CD4-positive, alpha-beta T cell (primary cell): ENCODE measurements at regions of chr3 and their contacts with region 1.

Region 1: GRCh38 chr3:143674100-143674968 is 173.9 kb downstream of the SLC9A9 start:
- DNase-seq: peak; percentile 38 to 85 (median 66)
- ATAC-seq: peak; percentile 97
- H3K4me3 ChIP-seq: no peak overlapping the region
- H3K4me3 Mint-ChIP-seq: peak overlapping the region; percentile 0
- H3K27ac ChIP-seq: no peak overlapping the region
- H3K27ac Mint-ChIP-seq: no peak overlapping the region
- H3K4me1 ChIP-seq: peaks cover 3% of the 10 kb centered on the region
- H3K4me1 Mint-ChIP-seq: peaks cover 6% of the 10 kb centered on the region
- H3K27me3 ChIP-seq: no peaks in the 10 kb centered on the region
- H3K27me3 Mint-ChIP-seq: no peaks in the 10 kb centered on the region
- CTCF ChIP-seq: peak; percentile 95

Region 2: DNA sequence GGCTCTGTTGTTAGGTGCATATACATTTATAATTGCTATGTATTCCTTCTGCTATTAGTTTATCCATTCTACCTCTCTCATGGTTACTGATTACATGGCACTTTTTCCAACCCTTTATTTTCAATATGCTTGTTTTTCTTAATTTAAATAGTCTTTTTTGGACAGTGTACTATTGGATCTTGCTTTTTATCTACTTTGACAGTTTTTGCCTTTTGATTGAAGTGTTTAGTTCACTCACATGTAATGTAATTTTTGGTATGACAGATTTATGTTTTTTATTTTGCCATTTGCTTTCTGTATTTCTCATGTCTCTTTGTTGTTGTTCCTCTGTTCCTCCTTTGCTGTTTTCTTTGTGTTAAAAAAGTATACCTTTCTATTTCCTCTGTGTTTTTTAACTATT is 906.0 kb before region 1 on chr3:
- CTCF ChIA-PET with region 1: no interaction called
- POLR2A ChIA-PET with region 1: no interaction called
- intact Hi-C with region 1: no loop called
- DNase-seq: no peak
- ATAC-seq: no peak
- H3K4me3 ChIP-seq: no peak overlapping the region
- H3K4me3 Mint-ChIP-seq: no peak overlapping the region
- H3K27ac ChIP-seq: no peak overlapping the region
- H3K27ac Mint-ChIP-seq: no peak overlapping the region
- H3K4me1 ChIP-seq: no peaks in the 10 kb centered on the region
- H3K4me1 Mint-ChIP-seq: no peaks in the 10 kb centered on the region
- H3K27me3 ChIP-seq: no peaks in the 10 kb centered on the region
- H3K27me3 Mint-ChIP-seq: no peaks in the 10 kb centered on the region
- CTCF ChIP-seq: no peak

Region 3: GRCh38 chr3:142828703-142829305 is 845.5 kb before region 1 on chr3:
- CTCF ChIA-PET with region 1: no interaction called
- POLR2A ChIA-PET with region 1: no interaction called
- intact Hi-C with region 1: loop called in 1 of 2 experiments (anchors 5 kb)
- DNase-seq: peak; percentile 14 to 67 (median 34)
- ATAC-seq: peak; percentile 82
- H3K4me3 ChIP-seq: no peak overlapping the region
- H3K4me3 Mint-ChIP-seq: no peak overlapping the region
- H3K27ac ChIP-seq: no peak overlapping the region
- H3K27ac Mint-ChIP-seq: no peak overlapping the region
- H3K4me1 ChIP-seq: no peaks in the 10 kb centered on the region
- H3K4me1 Mint-ChIP-seq: no peaks in the 10 kb centered on the region
- H3K27me3 ChIP-seq: no peaks in the 10 kb centered on the region
- H3K27me3 Mint-ChIP-seq: no peaks in the 10 kb centered on the region
- CTCF ChIP-seq: peak; percentile 49

Region 4: DNA sequence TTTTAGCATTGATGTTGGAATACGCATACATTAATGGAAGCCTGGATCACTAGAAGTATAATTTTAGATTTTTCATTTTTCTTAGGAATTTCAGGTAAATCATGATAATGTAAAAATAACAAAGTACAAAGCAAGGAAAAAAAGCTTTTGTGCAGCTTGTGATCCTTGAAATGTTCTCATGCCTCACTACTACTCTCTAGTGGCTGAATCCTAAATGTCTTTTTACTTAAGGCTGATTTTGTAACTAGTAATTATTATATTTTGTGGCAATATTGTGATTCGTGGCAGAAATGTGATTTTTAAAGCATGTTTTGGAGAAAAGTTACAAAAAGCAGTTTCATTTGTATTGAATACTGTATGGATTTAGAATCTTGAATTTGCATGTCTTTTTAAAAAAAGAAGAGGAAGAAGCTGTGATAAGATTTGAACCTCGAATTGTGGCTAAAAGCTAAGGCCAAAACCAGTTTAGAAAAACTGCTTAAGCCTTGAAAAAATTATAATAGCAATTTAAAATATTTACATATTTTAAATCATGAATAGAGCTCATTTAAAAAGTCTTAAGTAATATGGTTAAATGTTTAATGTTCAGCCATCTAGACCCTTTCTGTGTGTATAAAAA is 634.0 kb before region 1 on chr3:
- CTCF ChIA-PET with region 1: no interaction called
- POLR2A ChIA-PET with region 1: no interaction called
- intact Hi-C with region 1: loop called in 1 of 2 experiments (anchors 10 kb)
- DNase-seq: peak in 2 of 14 experiments; percentile 11
- ATAC-seq: no peak
- H3K4me3 ChIP-seq: no peak overlapping the region
- H3K4me3 Mint-ChIP-seq: no peak overlapping the region
- H3K27ac ChIP-seq: no peak overlapping the region
- H3K27ac Mint-ChIP-seq: no peak overlapping the region
- H3K4me1 ChIP-seq: no peaks in the 10 kb centered on the region
- H3K4me1 Mint-ChIP-seq: peaks cover 21% of the 10 kb centered on the region
- H3K27me3 ChIP-seq: no peaks in the 10 kb centered on the region
- H3K27me3 Mint-ChIP-seq: no peaks in the 10 kb centered on the region
- CTCF ChIP-seq: no peak

Region 5: DNA sequence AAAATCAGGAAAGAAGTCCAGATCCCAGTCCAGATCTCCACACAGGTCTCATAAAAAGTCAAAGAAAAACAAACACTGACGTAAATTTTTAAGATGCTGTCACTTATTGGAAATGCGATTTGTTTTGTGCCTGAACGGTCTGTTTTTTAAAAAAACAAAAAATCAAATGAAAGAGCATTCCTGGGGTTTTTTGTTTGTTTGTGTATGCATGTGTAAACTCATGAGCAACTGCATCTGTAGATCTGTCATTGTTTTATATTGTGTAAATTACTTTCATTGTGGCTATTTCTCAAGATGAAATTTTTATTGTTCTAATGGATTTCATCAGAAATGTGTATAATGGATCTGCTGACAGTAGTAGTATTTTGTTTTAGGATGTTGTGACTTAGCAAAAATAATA is 618.0 kb before region 1 on chr3:
- CTCF ChIA-PET with region 1: no interaction called
- POLR2A ChIA-PET with region 1: no interaction called
- intact Hi-C with region 1: loop called in 1 of 2 experiments (anchors 10 kb)
- DNase-seq: no peak
- ATAC-seq: no peak
- H3K4me3 ChIP-seq: no peak overlapping the region
- H3K4me3 Mint-ChIP-seq: no peak overlapping the region
- H3K27ac ChIP-seq: no peak overlapping the region
- H3K27ac Mint-ChIP-seq: no peak overlapping the region
- H3K4me1 ChIP-seq: no peaks in the 10 kb centered on the region
- H3K4me1 Mint-ChIP-seq: peaks cover 26% of the 10 kb centered on the region
- H3K27me3 ChIP-seq: no peaks in the 10 kb centered on the region
- H3K27me3 Mint-ChIP-seq: no peaks in the 10 kb centered on the region
- CTCF ChIP-seq: no peak